HEK293T (cell line): ENCODE measurements at regions of chrX and their contacts with region 1.

Region 1: GRCh38 chrX:132730266-132730665 is 228.2 kb downstream of the HS6ST2 start:
- DNase-seq: no peak

Region 2: GRCh38 chrX:132568291-132568690 is 162.0 kb before region 1 on chrX:
- CTCF ChIA-PET with region 1: no interaction called
- POLR2A ChIA-PET with region 1: no interaction called
- DNase-seq: no peak

Region 3: DNA sequence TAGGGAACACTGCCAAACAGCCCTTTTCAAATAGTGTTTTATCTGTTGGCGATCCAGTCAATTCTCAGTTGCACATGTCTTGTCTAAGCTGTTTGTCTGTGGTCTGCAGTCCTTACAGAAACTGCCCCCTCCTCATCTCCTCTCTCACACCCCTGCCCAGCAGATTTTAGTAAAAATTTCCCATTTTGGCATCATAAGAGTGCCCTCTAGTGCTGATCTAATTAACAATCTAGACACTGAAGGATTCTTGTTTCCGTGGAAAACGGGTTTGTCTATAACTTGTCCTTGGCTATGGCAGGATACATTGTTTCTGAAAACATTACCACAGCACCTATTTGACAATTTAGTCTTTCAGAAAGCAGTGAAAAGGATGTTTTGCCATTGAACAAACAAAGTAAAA is 14.3 kb before region 1 on chrX:
- CTCF ChIA-PET with region 1: interaction called, 10 read pairs
- POLR2A ChIA-PET with region 1: no interaction called
- DNase-seq: no peak

Region 4: DNA sequence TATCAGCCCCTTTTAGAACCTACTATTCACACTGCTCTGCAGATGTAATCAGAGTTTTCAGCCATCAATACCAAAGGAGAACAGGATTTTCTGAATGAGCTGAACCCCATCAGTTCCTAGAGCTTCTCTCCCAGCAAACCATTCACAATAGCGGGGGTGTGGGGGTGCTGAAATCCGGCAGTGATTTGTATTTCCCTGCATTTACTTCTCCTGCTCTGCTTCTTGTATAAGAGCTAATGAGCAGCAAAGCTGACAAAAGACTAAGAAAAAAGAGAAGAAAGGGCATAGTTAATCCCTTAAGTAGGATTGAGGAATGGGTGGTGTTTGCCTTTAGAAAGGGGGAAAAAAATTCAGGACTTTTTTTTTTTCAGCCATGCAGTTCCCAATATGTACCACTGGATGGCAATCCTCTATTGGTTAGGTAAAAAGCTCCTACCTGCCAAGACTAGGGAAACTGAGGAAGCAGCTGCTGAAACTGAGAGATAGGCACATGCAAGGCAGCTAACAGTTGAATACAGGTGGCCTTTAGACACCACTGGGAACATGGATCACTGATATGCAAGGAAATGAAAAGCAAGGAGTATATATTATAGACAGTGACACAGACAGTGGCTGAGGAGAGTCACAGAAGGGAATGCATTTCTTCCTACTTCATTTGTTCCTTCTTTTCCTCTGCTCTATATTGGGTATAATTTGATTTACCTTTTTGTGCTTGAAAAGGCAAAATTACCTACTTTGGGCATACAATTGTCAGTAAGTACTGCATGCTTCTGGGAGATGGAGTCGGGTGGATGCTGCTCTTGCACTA is 10.3 kb after region 1 on chrX:
- CTCF ChIA-PET with region 1: no interaction called
- POLR2A ChIA-PET with region 1: no interaction called
- DNase-seq: no peak